ENCODE measurements at regions of chr16 and their contacts with region 1.

Region 1: DNA sequence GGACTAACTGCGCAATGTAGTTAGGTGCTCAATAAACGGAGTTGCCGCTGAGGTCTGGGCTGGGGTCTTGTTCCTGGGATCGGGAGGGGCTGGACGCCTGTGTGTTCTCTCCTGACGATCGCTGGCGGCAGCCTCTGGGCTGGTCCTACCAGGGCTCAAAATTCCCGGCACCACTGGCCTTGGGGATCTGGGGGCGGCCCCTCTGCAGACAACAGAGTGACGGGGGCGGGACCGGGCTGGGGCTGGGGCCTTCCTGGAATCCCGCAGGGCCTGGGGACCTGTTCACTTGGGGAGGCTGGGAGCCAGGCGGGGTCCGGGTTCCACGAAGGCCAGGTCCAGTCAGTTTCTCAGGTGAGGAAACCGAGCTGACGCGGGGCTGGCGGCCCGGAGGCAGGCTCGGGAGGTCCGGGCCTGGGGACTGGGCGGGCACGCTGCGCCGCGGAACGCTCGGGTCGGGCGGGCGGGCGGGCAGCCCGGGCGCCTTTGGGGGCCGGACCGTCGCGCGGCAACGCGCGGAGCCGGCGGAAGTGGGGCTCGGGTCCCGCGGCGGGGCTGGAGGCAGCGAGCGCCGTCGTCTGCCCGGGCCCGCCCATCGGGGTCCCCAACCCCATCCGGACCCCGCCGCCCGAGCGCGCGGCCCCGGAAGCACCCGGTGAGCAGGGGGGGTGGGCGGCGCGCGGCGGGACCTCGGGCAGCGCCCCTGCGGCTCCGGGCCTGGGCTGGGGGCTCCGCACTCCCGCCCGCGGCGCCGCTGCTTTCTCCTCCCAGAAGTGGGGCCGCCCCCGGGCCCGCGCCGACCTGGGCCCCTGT is at the start of gene PIGQ:
- DNase-seq: peak; percentile 58 to 79 (median 78)
- ATAC-seq: peak; percentile 72
- H3K4me3 ChIP-seq: peak within 1 kb of the TSS; percentile 90
- H3K4me1 ChIP-seq: peaks cover 33% of the 10 kb centered on the region
- CTCF ChIP-seq: no peak
- total RNA-seq, gene PIGQ: 37.8 to 39.6 (median 38.4) TPM

Region 2: DNA sequence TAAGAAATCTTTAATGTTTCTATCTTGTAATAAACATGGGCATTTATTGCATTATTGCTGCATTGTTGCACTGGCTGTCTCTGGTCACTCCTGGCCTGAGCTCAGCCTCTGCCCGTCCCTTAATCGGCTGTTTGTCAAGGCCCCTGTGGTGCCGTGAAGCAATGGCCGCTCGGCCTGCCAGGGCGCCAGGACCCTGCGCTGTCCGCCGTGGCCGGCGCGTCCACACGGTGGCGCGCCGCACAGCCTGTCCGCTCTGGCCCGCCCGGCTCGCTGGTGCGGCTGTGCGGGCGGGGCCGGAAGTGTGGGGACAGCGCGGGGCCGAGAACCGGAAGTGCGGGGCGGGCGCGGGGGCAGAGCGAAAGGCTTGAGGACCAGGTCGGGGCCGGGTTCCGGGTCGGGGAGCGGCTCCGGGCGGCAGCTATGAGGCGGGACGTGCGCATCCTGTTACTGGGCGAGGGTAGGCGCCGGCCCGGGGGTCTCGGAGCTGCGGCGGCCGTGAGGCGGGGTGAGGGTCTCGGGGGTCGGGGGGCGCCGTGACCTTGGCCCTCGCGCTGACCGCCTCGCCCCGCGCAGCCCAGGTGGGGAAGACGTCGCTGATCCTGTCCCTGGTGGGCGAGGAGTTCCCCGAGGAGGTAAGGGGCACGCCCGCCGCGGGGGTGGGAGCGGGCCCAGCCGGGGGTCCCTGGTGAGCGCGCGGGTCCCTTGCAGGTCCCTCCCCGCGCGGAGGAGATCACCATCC is 98.3 kb after region 1 on chr16 and contains the start of gene RHOT2:
- intact Hi-C with region 1: loop called (anchors 10 kb)
- DNase-seq: peak; percentile 94 to 97 (median 96)
- ATAC-seq: peak; percentile 97
- H3K4me3 ChIP-seq: peak within 1 kb of the TSS; percentile 95
- H3K4me1 ChIP-seq: peaks cover 8% of the 10 kb centered on the region
- CTCF ChIP-seq: peak; percentile 96
- total RNA-seq, gene RHOT2: 124 to 138 (median 127) TPM

Region 3: GRCh38 chr16:867461-868385 is 298.1 kb after region 1 on chr16:
- intact Hi-C with region 1: no loop called
- DNase-seq: peak in 1 of 3 donors; percentile 47
- ATAC-seq: no peak
- H3K4me3 ChIP-seq: no peak overlapping the region
- H3K4me1 ChIP-seq: no peaks in the 10 kb centered on the region
- CTCF ChIP-seq: no peak

Region 4: GRCh38 chr16:1036726-1037393 is 467.2 kb after region 1 on chr16:
- intact Hi-C with region 1: no loop called
- DNase-seq: no peak
- ATAC-seq: no peak
- H3K4me3 ChIP-seq: no peak overlapping the region
- H3K4me1 ChIP-seq: no peaks in the 10 kb centered on the region
- CTCF ChIP-seq: no peak

Measured in mucosa of descending colon (tissue), 3 donors.